Activated CD4-positive, alpha-beta T cell treated with anti-CD3 and anti-CD28 coated beads, Interleukin-2, amount 10 ng/mL, durations not matched to agents 24 days and 14 days (primary cell): ENCODE measurements at regions of chr3 and their contacts with region 1.

Region 1: DNA sequence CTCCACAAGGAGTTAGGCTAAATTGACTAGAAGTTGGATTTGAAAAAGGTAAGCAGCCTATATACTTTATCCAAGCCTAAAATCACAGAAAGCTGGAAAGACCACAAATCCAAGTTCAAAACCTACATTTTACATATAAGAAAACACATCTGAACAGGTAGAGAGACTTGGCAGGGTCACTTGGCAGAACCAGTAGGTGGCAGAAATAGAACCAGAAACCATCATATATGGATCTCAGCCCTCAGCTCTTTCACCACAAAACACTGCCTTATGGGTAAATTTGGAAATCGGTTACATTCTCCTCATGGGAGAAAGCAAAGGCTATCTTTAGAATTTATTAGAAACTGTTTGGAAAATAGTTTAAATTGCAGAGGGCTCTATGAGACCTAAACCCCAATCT is 44.2 kb downstream of the MKRN2 start:
- DNase-seq: no peak
- H3K4me3 Mint-ChIP-seq: no peak overlapping the region
- H3K27ac Mint-ChIP-seq: no peak overlapping the region
- H3K4me1 Mint-ChIP-seq: peaks cover 3% of the 10 kb centered on the region
- H3K27me3 Mint-ChIP-seq: no peaks in the 10 kb centered on the region

Region 2: GRCh38 chr3:12706504-12707253 is 105.6 kb after region 1 on chr3:
- intact Hi-C with region 1: no loop called
- DNase-seq: peak; percentile 89
- H3K4me3 Mint-ChIP-seq: no peak overlapping the region
- H3K27ac Mint-ChIP-seq: no peak overlapping the region
- H3K4me1 Mint-ChIP-seq: no peaks in the 10 kb centered on the region
- H3K27me3 Mint-ChIP-seq: peaks cover 8% of the 10 kb centered on the region

Region 3: DNA sequence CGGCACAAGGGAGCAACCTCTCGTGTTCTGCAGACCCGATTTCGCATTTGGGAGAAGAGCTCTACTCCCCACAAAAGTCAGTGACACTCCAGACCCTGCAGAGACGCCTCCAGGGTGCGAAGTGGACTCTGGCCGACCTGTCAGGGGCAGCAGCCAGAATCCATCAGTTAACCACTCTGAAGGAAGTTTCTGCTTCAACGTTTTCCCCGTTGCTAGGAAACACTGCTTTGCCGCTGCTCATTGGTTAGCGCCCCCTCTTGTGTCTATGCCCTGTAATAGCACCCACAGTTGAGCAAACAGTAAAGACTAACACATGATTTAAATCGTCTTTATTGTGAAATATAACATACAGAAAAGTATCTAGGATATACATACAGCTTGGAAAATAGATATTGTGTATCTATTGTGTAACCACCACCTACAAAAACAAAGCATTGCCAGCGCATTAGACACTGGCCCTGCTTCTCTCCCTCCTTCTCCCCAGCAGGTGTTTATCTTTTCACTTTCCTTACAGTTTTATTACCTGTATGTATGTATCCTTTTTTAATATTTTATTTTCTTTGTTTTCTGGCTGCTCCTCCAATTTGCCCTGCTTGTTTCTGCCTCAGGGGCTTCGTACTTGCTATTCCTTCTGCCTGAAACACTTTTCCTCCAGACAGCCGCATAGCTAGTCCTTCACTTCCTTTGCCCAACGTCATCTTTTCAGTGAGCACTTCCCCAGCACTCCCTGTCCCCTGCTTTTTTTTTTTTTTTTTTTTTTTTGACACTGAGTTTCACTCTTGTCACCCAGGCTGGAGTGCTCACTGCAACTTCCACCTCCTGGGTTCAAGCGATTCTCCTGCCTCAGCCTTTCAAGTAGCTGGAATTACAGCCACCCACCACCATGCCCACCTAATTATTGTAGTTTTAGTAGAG is 119.2 kb after region 1 on chr3:
- intact Hi-C with region 1: loop called (anchors 2 kb)
- DNase-seq: peak; percentile 92
- H3K4me3 Mint-ChIP-seq: peak overlapping the region; percentile 60
- H3K27ac Mint-ChIP-seq: no peak overlapping the region
- H3K4me1 Mint-ChIP-seq: peaks cover 5% of the 10 kb centered on the region
- H3K27me3 Mint-ChIP-seq: no peaks in the 10 kb centered on the region